AG04450 (cell line): ENCODE measurements at regions of chr6 and their contacts with region 1.

Region 1: GRCh38 chr6:30742316-30743098 is at the start of gene FLOT1:
- DNase-seq: peak; percentile 84
- H3K4me3 ChIP-seq: peak within 1 kb of the TSS; percentile 94
- H3K27ac ChIP-seq: peak within 1 kb of the TSS; percentile 93
- H3K27me3 ChIP-seq: no peaks in the 10 kb centered on the region
- CTCF ChIP-seq: no peak
- polyA plus RNA-seq, gene FLOT1: 155 and 156 TPM in 2 replicates

Region 2: GRCh38 chr6:30730601-30731435 is 11.7 kb before region 1 on chr6:
- CTCF ChIA-PET with region 1: interaction called, 8 read pairs
- POLR2A ChIA-PET with region 1: interaction called, 11 read pairs
- DNase-seq: no peak
- H3K4me3 ChIP-seq: no peak overlapping the region
- H3K27ac ChIP-seq: no peak overlapping the region
- H3K27me3 ChIP-seq: no peaks in the 10 kb centered on the region
- CTCF ChIP-seq: peak; percentile 50; the same call in 1 of the 2 replicates

Region 3: DNA sequence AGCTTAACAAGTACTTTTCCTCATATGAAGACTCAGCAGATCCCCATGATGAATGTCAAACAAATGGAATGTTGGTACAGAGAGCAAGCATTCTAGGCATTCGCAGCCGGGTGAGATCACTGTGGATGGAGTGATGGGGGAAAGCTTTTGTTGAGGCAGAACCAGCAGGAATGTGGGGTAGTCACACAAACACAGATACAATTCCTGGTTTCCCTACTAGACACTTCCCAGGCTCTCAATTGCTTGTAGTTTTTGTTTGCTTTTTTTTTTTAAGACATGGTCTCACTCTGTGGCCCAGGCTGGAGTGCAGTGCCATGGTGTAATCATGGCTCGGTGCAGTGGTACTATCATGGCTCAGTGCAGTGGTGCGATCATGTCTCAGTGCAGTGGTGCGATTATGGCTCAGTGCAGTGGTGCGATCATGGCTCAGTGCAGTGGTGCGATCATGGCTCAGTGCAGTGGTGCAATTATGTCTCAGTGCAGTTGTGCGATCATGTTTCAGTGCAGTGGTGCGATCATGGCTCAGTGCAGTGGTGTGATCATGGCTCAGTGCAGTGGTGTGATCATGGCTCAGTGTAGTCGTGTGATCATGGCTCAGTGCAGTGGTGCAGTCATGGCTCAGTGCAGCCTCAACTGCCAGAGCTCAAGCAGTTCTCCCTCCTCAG is 17.2 kb after region 1 on chr6:
- CTCF ChIA-PET with region 1: no interaction called
- POLR2A ChIA-PET with region 1: interaction called, 12 read pairs
- DNase-seq: peak; percentile 93
- H3K4me3 ChIP-seq: no peak overlapping the region
- H3K27ac ChIP-seq: peak overlapping the region; percentile 94
- H3K27me3 ChIP-seq: no peaks in the 10 kb centered on the region
- CTCF ChIP-seq: no peak

Region 4: DNA sequence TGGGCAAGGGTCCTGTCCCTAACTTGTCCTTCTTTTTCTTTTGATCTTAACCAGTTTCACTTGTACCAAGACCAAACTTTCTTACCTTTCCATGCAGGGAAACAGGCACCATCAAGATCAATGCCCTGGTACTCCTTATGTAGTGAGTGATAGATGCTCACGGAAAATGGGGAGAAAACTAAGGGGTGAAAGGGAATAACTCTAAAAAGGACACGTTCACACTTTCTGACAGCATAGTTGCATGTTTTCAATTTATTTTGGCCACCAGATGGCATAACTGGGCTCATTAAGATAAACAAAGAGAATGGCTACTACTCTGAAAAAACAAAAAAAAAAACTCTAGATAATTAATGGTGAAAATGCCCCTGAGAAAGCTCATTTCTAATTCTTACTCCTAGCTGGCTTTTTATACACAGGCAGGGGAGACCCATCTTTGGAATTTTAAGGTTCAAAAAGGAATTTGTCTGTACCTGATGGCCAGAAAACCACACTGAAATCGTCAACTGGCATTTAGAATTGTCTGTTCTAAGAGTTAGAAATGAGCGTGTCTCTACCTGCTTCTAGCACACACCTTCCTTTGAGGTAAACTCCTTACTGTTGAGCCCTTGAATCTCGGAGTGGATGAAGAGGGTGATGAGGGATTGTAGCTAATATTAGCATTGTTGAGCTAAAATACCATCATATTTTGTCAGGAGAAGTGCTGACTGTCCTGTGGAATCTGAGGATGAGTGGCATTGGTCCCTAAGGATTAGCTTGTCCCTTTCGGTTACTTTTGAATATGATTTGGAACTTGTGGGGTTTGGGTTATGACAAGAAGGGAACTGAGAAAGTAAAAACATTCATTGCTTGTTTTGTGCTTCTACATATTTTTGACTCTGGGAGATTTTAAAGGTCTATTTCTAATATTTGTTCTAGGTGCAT is 79.6 kb after region 1 on chr6:
- CTCF ChIA-PET with region 1: interaction called, 5 read pairs
- POLR2A ChIA-PET with region 1: interaction called, 22 read pairs
- DNase-seq: no peak
- H3K4me3 ChIP-seq: no peak overlapping the region
- H3K27ac ChIP-seq: peak overlapping the region; percentile 21
- H3K27me3 ChIP-seq: no peaks in the 10 kb centered on the region
- CTCF ChIP-seq: peak; percentile 58

Region 5: GRCh38 chr6:30883685-30884520 is 141.4 kb after region 1 on chr6 and contains the start of gene DDR1:
- CTCF ChIA-PET with region 1: no interaction called
- POLR2A ChIA-PET with region 1: interaction called, 12 read pairs
- DNase-seq: no peak
- H3K4me3 ChIP-seq: peak within 1 kb of the TSS; percentile 83
- H3K27ac ChIP-seq: no peak within 1 kb of the TSS
- H3K27me3 ChIP-seq: no peaks in the 10 kb centered on the region
- CTCF ChIP-seq: no peak
- polyA plus RNA-seq, gene DDR1: 9.9 and 13.3 TPM in 2 replicates